Natural killer cell (primary cell): ENCODE measurements at regions of chr12 and their contacts with region 1.

Region 1: GRCh38 chr12:53379389-53380103 is 430 bp upstream of the SP1 start:
- DNase-seq: peak in 1 of 2 donors; percentile 100
- ATAC-seq: peak; percentile 73 to 87 (median 76)
- H3K4me3 ChIP-seq: peak overlapping the region; percentile 53
- H3K4me3 Mint-ChIP-seq: no peak overlapping the region
- H3K27ac ChIP-seq: peak overlapping the region; percentile 74
- H3K27ac Mint-ChIP-seq: no peak overlapping the region
- H3K4me1 ChIP-seq: peaks cover 41% of the 10 kb centered on the region
- H3K4me1 Mint-ChIP-seq: peaks cover 27 to 35% of the 10 kb centered on the region in 2 donors
- H3K27me3 ChIP-seq: no peaks in the 10 kb centered on the region
- H3K27me3 Mint-ChIP-seq: no peaks in the 10 kb centered on the region
- CTCF ChIP-seq: no peak

Region 2: DNA sequence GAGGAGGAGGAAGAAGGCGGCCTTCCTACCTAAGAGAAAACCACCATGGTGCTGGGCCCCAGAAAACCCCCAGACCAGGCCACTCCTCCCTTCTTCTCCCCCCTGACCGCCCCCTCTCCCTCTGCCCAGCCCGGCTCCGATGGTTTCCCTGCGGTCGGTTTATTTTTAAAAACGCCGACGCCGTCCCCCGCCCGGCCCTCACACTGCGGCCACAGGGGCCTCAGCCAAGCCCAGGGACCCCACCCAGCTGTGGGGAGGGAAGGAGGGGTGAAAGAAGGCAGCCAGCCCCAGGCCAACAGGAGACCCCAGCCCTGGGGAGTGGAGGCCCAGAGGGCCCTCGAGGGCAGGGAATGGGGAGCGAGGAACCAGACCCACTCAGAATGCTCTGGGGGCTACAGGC is 46.8 kb before region 1 on chr12:
- intact Hi-C with region 1: no loop called
- DNase-seq: no peak
- ATAC-seq: no peak
- H3K4me3 ChIP-seq: no peak overlapping the region
- H3K4me3 Mint-ChIP-seq: no peak overlapping the region
- H3K27ac ChIP-seq: no peak overlapping the region
- H3K27ac Mint-ChIP-seq: no peak overlapping the region
- H3K4me1 ChIP-seq: peaks cover 9% of the 10 kb centered on the region
- H3K4me1 Mint-ChIP-seq: peaks cover 9 to 14% of the 10 kb centered on the region in 2 donors
- H3K27me3 ChIP-seq: peaks cover 6% of the 10 kb centered on the region
- H3K27me3 Mint-ChIP-seq: peaks cover 24 to 34% of the 10 kb centered on the region in 2 donors
- CTCF ChIP-seq: no peak

Region 3: GRCh38 chr12:53352331-53353256 is 27.0 kb before region 1 on chr12:
- intact Hi-C with region 1: loop called (anchors 1 kb)
- DNase-seq: peak; percentile 79 to 96
- ATAC-seq: peak; percentile 98 to 100 (median 99)
- H3K4me3 ChIP-seq: no peak overlapping the region
- H3K4me3 Mint-ChIP-seq: no peak overlapping the region
- H3K27ac ChIP-seq: no peak overlapping the region
- H3K27ac Mint-ChIP-seq: peak overlapping the region in 1 of 2 donors; percentile 68
- H3K4me1 ChIP-seq: peaks cover 2% of the 10 kb centered on the region
- H3K4me1 Mint-ChIP-seq: peaks cover 7 to 8% of the 10 kb centered on the region in 2 donors
- H3K27me3 ChIP-seq: no peaks in the 10 kb centered on the region
- H3K27me3 Mint-ChIP-seq: no peaks in the 10 kb centered on the region
- CTCF ChIP-seq: peak; percentile 72

Region 4: DNA sequence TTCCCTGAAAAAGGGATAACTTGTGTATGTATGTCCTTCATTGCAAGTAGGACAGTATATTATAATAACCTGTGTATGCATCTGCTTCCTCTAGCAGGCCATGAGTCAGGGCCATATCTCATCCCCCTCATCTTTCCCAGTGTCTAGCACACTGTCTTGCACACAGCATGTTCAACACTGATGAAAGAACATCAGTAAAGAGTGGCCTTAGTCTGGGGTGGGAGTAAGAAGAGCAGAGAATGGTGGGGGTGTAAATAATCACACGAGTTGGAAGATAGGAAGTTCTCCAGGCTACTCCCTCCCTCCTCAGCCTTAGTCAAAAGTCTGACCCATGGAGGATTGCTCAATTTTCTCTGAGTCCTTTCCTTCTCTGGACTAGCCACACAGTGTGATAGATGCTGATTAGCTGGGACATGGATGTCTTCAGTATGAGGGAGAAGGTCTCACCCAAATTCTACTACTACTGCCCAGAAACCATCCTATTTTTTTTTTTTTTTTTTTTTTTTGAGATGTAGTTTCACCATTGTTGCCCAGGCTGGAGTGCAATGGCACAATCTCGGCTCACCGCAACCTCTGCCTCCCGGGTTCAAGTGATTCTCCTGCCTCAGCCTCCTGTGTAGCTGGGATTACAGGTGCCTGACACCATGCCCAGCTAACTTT is 14.2 kb before region 1 on chr12:
- intact Hi-C with region 1: loop called (anchors 2 kb)
- DNase-seq: no peak
- ATAC-seq: no peak
- H3K4me3 ChIP-seq: no peak overlapping the region
- H3K4me3 Mint-ChIP-seq: no peak overlapping the region
- H3K27ac ChIP-seq: no peak overlapping the region
- H3K27ac Mint-ChIP-seq: peak overlapping the region in 1 of 2 donors; percentile 63
- H3K4me1 ChIP-seq: peaks cover 35% of the 10 kb centered on the region
- H3K4me1 Mint-ChIP-seq: peaks cover under 1 to 18% of the 10 kb centered on the region in 2 donors
- H3K27me3 ChIP-seq: no peaks in the 10 kb centered on the region
- H3K27me3 Mint-ChIP-seq: no peaks in the 10 kb centered on the region
- CTCF ChIP-seq: no peak

Region 5: DNA sequence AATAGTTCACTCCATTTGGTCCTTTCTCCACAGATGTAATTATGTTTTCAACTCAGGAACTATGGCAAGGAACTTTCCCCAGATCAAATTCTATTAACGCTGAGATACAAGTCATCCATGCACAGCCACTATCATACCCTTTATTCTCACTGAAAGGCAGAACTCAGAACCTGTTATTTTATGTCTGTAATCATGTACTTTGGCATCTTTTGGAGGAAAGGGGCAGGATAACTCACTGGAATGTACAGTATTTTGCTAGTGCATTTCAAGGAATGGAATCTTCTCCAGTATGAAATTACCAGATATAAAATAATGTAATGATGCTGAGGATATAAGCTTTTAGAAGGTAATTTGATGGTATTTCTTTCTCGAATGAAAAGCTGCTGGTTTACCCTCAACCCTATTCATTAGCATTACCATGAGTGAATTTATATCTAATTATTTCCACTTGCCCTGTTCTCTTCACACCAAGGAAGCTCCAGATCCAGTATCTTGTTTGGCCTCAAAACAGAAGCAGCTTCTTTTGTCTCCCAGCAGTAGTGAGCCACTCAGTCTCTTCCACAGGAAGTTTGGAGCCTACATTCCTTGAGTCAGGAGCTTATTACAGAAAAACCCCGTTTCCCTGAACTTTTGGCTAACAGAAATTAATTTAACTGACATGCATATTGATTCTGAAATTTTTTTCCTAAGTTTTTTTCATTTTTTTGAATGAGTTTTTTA is 34.1 kb after region 1 on chr12:
- intact Hi-C with region 1: no loop called
- DNase-seq: no peak
- ATAC-seq: no peak
- H3K4me3 ChIP-seq: no peak overlapping the region
- H3K4me3 Mint-ChIP-seq: no peak overlapping the region
- H3K27ac ChIP-seq: no peak overlapping the region
- H3K27ac Mint-ChIP-seq: peak overlapping the region; percentile 58 to 78
- H3K4me1 ChIP-seq: peaks cover 12% of the 10 kb centered on the region
- H3K4me1 Mint-ChIP-seq: peaks cover 13 to 15% of the 10 kb centered on the region in 2 donors
- H3K27me3 ChIP-seq: no peaks in the 10 kb centered on the region
- H3K27me3 Mint-ChIP-seq: no peaks in the 10 kb centered on the region
- CTCF ChIP-seq: no peak

Region 6: DNA sequence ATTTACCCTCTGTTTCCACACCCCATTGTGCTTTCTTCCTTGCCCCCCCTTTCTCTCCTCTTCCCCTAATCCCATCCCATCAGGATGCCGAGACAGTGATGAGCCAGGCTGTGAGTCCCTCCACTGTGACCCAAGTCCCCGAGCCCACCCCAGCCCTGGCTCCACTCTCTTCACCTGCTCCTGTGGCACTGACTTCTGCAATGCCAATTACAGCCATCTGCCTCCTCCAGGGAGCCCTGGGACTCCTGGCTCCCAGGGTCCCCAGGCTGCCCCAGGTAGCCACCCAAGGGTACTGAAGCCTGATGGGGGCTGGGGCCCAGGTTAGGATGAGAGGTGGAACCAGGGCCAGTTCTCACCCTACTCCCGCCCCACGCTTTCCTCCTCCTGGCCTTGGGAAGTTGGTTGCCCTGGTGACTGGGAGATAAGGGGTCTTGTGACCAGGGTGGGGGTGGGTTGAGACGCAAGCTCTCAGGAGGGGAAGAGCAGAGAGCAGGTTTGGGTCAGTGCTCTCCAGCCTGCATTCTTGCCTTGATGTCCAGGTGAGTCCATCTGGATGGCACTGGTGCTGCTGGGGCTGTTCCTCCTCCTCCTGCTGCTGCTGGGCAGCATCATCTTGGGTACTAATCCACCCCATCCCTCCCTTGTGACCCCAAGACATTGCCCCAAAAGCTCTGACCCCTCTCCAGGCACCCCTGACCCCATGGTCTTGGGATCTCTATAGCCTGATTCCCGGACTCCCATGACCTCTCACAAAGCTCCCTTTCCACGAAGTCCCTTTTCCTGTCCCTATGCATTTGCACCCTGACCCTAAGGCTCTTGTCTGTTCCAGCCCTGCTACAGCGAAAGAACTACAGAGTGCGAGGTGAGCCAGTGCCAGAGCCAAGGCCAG is 45.3 kb after region 1 on chr12:
- intact Hi-C with region 1: loop called (anchors 5 kb)
- DNase-seq: no peak
- ATAC-seq: no peak
- H3K4me3 ChIP-seq: no peak overlapping the region
- H3K4me3 Mint-ChIP-seq: no peak overlapping the region
- H3K27ac ChIP-seq: no peak overlapping the region
- H3K27ac Mint-ChIP-seq: no peak overlapping the region
- H3K4me1 ChIP-seq: peaks cover 4% of the 10 kb centered on the region
- H3K4me1 Mint-ChIP-seq: peaks cover 0 to 6% of the 10 kb centered on the region in 2 donors
- H3K27me3 ChIP-seq: no peaks in the 10 kb centered on the region
- H3K27me3 Mint-ChIP-seq: no peaks in the 10 kb centered on the region
- CTCF ChIP-seq: no peak

Region 7: GRCh38 chr12:53441040-53441833 is 61.7 kb after region 1 on chr12 and contains the start of gene PRR13:
- intact Hi-C with region 1: loop called (anchors 1 kb)
- DNase-seq: peak; percentile 93 to 99
- ATAC-seq: peak; percentile 97 to 100 (median 99)
- H3K4me3 ChIP-seq: peak within 1 kb of the TSS; percentile 99
- H3K4me3 Mint-ChIP-seq: peak within 1 kb of the TSS; percentile 99
- H3K27ac ChIP-seq: peak within 1 kb of the TSS; percentile 82
- H3K27ac Mint-ChIP-seq: peak within 1 kb of the TSS; percentile 94 to 96
- H3K4me1 ChIP-seq: peaks cover 36% of the 10 kb centered on the region
- H3K4me1 Mint-ChIP-seq: peaks cover 38 to 50% of the 10 kb centered on the region in 2 donors
- H3K27me3 ChIP-seq: no peaks in the 10 kb centered on the region
- H3K27me3 Mint-ChIP-seq: no peaks in the 10 kb centered on the region
- CTCF ChIP-seq: no peak
- total RNA-seq, gene PRR13: 214 to 233 (median 231) TPM

Region 8: DNA sequence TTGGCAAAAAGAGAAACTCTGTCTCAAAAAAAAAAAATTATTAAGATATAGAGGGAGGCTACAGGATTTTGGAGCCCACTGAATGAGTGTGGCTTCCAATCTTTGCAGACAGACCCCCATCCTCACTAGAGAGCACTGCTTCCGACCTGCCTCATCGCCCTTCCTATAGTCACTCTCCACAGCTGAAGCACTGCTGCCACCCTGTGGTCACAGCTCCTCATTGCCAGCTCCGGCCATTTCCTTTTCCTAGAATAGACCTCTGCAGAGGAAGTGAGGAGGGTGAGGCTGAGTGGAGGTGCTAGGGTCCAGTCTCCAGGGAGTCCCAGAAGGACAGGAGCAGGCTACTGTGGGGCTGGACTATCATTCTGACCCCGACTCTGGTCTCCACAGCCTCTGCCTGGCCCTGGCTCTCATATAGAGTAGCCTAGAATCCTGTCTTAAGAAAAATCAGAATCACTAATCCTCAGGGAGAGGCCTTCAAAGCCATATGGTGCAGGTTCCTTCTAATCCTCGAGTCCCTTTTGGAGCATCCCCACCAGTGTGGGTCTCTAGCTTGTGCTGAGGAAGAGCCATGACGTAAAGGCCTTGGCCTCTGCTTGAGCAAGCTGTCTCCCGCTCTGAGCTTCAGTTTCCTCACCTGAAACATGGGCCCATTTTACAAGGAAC is 129.1 kb after region 1 on chr12:
- intact Hi-C with region 1: no loop called
- DNase-seq: peak; percentile 81 to 89
- ATAC-seq: peak; percentile 96 to 100 (median 99)
- H3K4me3 ChIP-seq: no peak overlapping the region
- H3K4me3 Mint-ChIP-seq: no peak overlapping the region
- H3K27ac ChIP-seq: peak overlapping the region; percentile 41
- H3K27ac Mint-ChIP-seq: peak overlapping the region; percentile 56 to 74
- H3K4me1 ChIP-seq: peaks cover 9% of the 10 kb centered on the region
- H3K4me1 Mint-ChIP-seq: peaks cover 6% of the 10 kb centered on the region in 2 donors
- H3K27me3 ChIP-seq: no peaks in the 10 kb centered on the region
- H3K27me3 Mint-ChIP-seq: no peaks in the 10 kb centered on the region
- CTCF ChIP-seq: peak; percentile 87